H1 (cell line): ENCODE measurements at regions of chr20 and their contacts with region 1.

Region 1: DNA sequence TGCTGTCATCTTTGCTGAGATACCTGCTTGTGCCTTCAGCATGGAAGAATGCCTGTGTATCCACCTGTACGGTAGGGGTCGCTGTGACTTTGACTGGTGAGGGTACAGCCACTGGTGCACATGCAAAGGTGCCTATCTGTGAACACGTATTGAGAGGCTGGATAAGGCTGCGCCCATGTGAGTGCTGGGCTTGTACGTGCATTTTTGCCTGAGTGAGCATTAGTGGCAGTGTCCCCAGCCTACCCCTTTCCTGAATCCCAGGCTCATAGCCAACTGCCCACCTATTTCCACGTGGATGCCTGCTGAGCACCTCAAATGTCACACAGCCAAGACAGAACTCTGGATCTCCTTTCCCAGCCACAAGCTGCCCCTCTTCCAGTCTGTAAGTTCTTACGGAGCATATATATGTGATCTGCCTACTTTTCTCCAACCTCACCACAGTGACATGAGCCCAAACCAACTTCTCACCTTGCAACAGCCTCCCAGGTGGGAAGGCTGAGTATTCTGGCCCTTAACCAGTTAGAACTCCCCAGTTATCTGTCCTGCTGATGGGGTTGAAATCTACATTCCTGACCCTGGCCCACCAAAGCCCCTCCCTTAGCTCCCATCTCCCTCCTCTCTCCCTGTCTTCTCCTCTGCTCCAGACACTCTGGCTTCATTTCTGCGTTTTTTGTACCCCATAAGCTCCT is 1.1 kb upstream of the SLC2A10 start:
- DNase-seq: peak in 1 of 2 experiments; percentile 83
- H3K4me3 ChIP-seq: no peak overlapping the region
- H3K27ac ChIP-seq: no peak overlapping the region
- H3K4me1 ChIP-seq: peaks cover 4 to 13% (median 10%) of the 10 kb centered on the region in 4 experiments
- H3K27me3 ChIP-seq: no peaks in the 10 kb centered on the region; a peak in 2 of 7 replicates
- CTCF ChIP-seq: peak; percentile 70 to 95 (median 90)
- EP300 ChIP-seq: no peak
- POLR2A ChIP-seq: no peak
- RAD21 ChIP-seq: peak in 1 of 2 experiments; percentile 49; a peak in 3 of 4 replicates

Region 2: DNA sequence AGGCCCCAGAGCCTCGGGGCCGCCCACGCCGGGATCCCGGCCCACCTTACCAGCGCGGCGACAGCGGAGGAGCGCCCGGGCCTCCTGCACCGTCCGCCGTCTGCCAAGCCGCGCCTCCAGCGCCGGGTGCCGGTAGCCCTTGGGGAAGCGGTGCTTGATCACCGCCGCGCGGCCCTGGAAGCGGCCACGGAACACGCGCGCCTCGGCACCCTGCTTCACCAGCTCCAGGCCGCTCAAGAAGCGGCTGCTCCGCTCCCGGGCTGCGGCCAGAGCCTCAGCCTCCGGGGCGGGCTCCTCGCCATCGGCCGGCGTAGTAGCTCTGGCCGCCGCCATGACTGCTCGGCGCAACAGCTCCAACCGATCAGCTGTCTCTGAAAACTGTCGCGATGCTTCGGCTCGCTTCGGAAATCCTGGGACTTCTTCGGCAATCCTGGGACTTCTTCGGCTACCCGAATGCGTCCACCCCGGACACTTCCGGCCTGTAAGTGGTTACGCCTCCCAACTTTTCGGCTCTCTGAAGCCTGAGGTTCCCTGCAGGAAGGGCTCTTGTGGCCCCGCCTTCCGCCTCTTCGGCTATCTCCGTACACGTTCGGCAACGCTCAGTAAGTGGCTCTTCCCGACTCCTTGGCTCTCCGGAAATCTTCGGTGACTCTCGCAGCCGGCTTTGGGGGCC is 19.1 kb before region 1 on chr20 and contains the start of gene TP53RK:
- CTCF ChIA-PET with region 1: interaction called, 18 read pairs
- POLR2A ChIA-PET with region 1: interaction called, 22 read pairs
- DNase-seq: peak; percentile 96 to 100
- H3K4me3 ChIP-seq: peak within 1 kb of the TSS; percentile 81 to 93 (median 87)
- H3K27ac ChIP-seq: peak within 1 kb of the TSS; percentile 87
- H3K4me1 ChIP-seq: peaks cover 0 to 8% (median 3%) of the 10 kb centered on the region in 4 experiments; a peak in 4 of 7 replicates
- H3K27me3 ChIP-seq: no peaks in the 10 kb centered on the region
- CTCF ChIP-seq: peak in 2 of 3 experiments; percentile 5 to 25; a peak in 2 of 4 replicates
- EP300 ChIP-seq: no peak
- POLR2A ChIP-seq: peak; percentile 84 to 92
- RAD21 ChIP-seq: peak in 1 of 2 experiments; percentile 3; a peak in 1 of 4 replicates
- total RNA-seq, gene TP53RK: 16.3 TPM in 2 replicates

Region 3: GRCh38 chr20:46694494-46694893 is 13.8 kb before region 1 on chr20:
- CTCF ChIA-PET with region 1: interaction called, 18 read pairs
- POLR2A ChIA-PET with region 1: interaction called, 16 read pairs
- DNase-seq: no peak
- H3K4me3 ChIP-seq: no peak overlapping the region
- H3K27ac ChIP-seq: no peak overlapping the region
- H3K4me1 ChIP-seq: no peaks in the 10 kb centered on the region; a peak in 1 of 7 replicates
- H3K27me3 ChIP-seq: no peaks in the 10 kb centered on the region
- CTCF ChIP-seq: no peak
- EP300 ChIP-seq: no peak
- POLR2A ChIP-seq: no peak
- RAD21 ChIP-seq: no peak